ENCODE measurements at regions of chr11 and their contacts with region 1.

Region 1: GRCh38 chr11:33857933-33858371 is 33.9 kb downstream of the LMO2 start:
- DNase-seq: peak; percentile 58 to 85 (median 76)
- H3K4me3 ChIP-seq: no peak overlapping the region
- H3K27ac ChIP-seq: no peak overlapping the region
- H3K4me1 ChIP-seq: peaks cover 0 to 6% of the 10 kb centered on the region in 2 donors
- H3K27me3 ChIP-seq: no peaks in the 10 kb centered on the region
- CTCF ChIP-seq: peak; percentile 82 to 93 (median 88)
- POLR2A ChIP-seq: no peak

Region 2: GRCh38 chr11:33907421-33907820 is 49.5 kb after region 1 on chr11:
- intact Hi-C with region 1: loop called in 1 of 2 experiments (anchors 2 kb)
- DNase-seq: no peak
- H3K4me3 ChIP-seq: no peak overlapping the region
- H3K27ac ChIP-seq: no peak overlapping the region
- H3K4me1 ChIP-seq: no peaks in the 10 kb centered on the region
- H3K27me3 ChIP-seq: no peaks in the 10 kb centered on the region
- CTCF ChIP-seq: no peak
- POLR2A ChIP-seq: no peak

Region 3: GRCh38 chr11:33970984-33971466 is 113.1 kb after region 1 on chr11:
- intact Hi-C with region 1: loop called (anchors 2 to 5 kb)
- DNase-seq: peak; percentile 55 to 80 (median 62)
- H3K4me3 ChIP-seq: no peak overlapping the region
- H3K27ac ChIP-seq: no peak overlapping the region
- H3K4me1 ChIP-seq: no peaks in the 10 kb centered on the region
- H3K27me3 ChIP-seq: no peaks in the 10 kb centered on the region
- CTCF ChIP-seq: peak; percentile 34 to 89 (median 86)
- POLR2A ChIP-seq: no peak

Measured in adrenal gland (tissue), 19 donors.